ENCODE measurements at regions of chr18 and their contacts with region 1.

Region 1: GRCh38 chr18:48951448-48952286 is 902 bp upstream of the SMAD7 start:
- DNase-seq: peak; percentile 80 to 90
- ATAC-seq: peak; percentile 55 to 60
- H3K4me3 ChIP-seq: peak overlapping the region; percentile 71 to 89 (median 82)
- H3K27ac ChIP-seq: peak overlapping the region; percentile 93 to 100 (median 94)
- H3K4me1 ChIP-seq: peaks cover 44 to 51% of the 10 kb centered on the region in 2 donors
- H3K27me3 ChIP-seq: no peaks in the 10 kb centered on the region
- CTCF ChIP-seq: peak in 3 of 5 experiments; percentile 33 to 37 (median 37)
- POLR2A ChIP-seq: peak; percentile 91 to 93

Region 2: GRCh38 chr18:47858607-47859006 is 1093.1 kb before region 1 on chr18:
- in situ Hi-C with region 1: no loop called
- intact Hi-C with region 1: no loop called
- DNase-seq: no peak
- ATAC-seq: no peak
- H3K4me3 ChIP-seq: no peak overlapping the region
- H3K27ac ChIP-seq: no peak overlapping the region
- H3K4me1 ChIP-seq: peaks cover 25 to 30% of the 10 kb centered on the region in 2 donors
- H3K27me3 ChIP-seq: no peaks in the 10 kb centered on the region
- CTCF ChIP-seq: no peak
- POLR2A ChIP-seq: no peak

Region 3: DNA sequence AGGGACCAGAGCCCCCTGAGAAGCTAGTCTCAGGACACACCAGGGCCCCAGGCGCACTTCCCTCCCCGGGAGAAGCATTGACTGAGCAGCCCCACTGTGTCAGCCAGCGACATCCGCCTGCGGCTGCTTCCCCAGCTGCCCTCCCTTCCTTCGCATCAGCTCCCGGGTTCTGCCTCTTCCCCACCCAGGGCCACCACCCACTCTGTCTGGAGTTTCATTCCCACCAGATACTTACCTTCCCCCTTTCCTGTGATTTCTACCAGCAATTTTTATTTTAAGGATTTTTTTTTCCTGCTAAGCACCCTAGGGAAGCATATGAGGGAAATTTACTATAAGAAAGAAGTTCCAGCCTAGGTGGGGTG is 100.1 kb before region 1 on chr18:
- in situ Hi-C with region 1: no loop called
- intact Hi-C with region 1: no loop called
- DNase-seq: no peak
- ATAC-seq: no peak
- H3K4me3 ChIP-seq: no peak overlapping the region
- H3K27ac ChIP-seq: peak overlapping the region in 3 of 4 donors; percentile 44 to 63 (median 46)
- H3K4me1 ChIP-seq: peaks cover 11 to 15% of the 10 kb centered on the region in 2 donors
- H3K27me3 ChIP-seq: no peaks in the 10 kb centered on the region
- CTCF ChIP-seq: no peak
- POLR2A ChIP-seq: no peak

Region 4: GRCh38 chr18:48975649-48976204 is 24.1 kb after region 1 on chr18:
- in situ Hi-C with region 1: no loop called
- intact Hi-C with region 1: loop called (anchors 1 kb)
- DNase-seq: peak; percentile 37 to 75
- ATAC-seq: peak; percentile 79 to 83
- H3K4me3 ChIP-seq: peak overlapping the region; percentile 57 to 95 (median 73)
- H3K27ac ChIP-seq: peak overlapping the region; percentile 82 to 96 (median 87)
- H3K4me1 ChIP-seq: peaks cover 3 to 5% of the 10 kb centered on the region in 2 donors
- H3K27me3 ChIP-seq: no peaks in the 10 kb centered on the region
- CTCF ChIP-seq: no peak
- POLR2A ChIP-seq: peak in 1 of 2 donors; percentile 85

Region 5: DNA sequence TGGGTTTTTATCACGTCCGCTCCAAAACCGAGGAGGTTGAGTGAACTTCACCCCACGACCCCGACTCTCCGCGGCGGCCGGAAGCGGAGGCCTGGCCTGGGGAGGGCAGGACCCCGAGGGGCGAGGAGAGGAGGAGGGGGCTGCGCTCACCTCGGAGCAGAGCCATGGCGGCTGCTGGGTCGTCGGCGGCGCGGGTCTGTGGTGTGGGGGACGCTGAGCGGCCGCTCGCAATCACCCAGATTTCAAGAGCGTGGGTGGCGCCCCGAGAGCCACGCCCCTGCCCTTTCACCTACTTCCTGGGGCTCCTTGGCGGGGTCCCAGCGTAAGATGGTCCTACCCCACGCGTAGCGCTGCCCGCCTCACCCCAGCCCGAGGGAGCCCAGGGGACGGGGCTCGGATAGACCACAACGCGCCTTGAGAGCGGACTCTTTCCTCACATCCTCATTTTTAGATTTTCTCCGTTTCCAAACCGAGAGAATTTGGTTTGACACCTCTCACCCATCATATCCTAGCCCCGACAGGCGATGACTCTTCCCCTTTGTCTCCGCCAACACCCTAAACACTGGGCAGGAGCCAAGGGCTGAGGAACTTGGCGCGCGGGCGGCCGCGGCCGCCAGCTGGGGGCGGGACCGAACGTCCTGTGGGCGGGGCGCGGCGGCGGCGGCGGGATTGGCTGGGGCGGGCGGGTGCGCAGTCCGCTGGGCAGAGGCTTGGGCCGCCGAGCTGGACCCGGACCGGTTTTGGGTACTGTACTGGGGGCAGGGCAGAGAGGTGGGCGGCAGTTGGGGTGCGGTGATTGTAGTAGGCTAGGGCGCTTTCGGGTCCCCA is 861.9 kb after region 1 on chr18 and contains the start of gene ACAA2:
- in situ Hi-C with region 1: no loop called
- intact Hi-C with region 1: loop called (anchors 10 kb)
- DNase-seq: peak; percentile 78 to 82
- ATAC-seq: peak; percentile 90 to 91
- H3K4me3 ChIP-seq: peak within 1 kb of the TSS; percentile 88 to 95 (median 92)
- H3K27ac ChIP-seq: peak within 1 kb of the TSS; percentile 93 to 99 (median 96)
- H3K4me1 ChIP-seq: peaks cover 14 to 20% of the 10 kb centered on the region in 2 donors
- H3K27me3 ChIP-seq: no peaks in the 10 kb centered on the region
- CTCF ChIP-seq: no peak
- POLR2A ChIP-seq: peak; percentile 38 to 65
- total RNA-seq, gene ACAA2: 73.7 to 95.7 (median 79.6) TPM